Activated CD4-positive, alpha-beta T cell treated with anti-CD3 and anti-CD28 coated beads for 36 hours (primary cell): ENCODE measurements at regions of chr11 and their contacts with region 1.

Region 1: GRCh38 chr11:126268708-126269579 is at the starts of genes FOXRED1 and SRPRA:
- DNase-seq: peak; percentile 100
- ATAC-seq: peak; percentile 100
- H3K4me3 Mint-ChIP-seq: peak within 1 kb of the TSS; percentile 86
- H3K27ac Mint-ChIP-seq: peak within 1 kb of the TSS; percentile 95
- H3K4me1 Mint-ChIP-seq: peaks cover 38% of the 10 kb centered on the region
- H3K27me3 Mint-ChIP-seq: no peaks in the 10 kb centered on the region
- total RNA-seq, gene FOXRED1: 39.0 to 43.7 TPM
- total RNA-seq, gene SRPRA: 131 to 139 TPM

Region 2: DNA sequence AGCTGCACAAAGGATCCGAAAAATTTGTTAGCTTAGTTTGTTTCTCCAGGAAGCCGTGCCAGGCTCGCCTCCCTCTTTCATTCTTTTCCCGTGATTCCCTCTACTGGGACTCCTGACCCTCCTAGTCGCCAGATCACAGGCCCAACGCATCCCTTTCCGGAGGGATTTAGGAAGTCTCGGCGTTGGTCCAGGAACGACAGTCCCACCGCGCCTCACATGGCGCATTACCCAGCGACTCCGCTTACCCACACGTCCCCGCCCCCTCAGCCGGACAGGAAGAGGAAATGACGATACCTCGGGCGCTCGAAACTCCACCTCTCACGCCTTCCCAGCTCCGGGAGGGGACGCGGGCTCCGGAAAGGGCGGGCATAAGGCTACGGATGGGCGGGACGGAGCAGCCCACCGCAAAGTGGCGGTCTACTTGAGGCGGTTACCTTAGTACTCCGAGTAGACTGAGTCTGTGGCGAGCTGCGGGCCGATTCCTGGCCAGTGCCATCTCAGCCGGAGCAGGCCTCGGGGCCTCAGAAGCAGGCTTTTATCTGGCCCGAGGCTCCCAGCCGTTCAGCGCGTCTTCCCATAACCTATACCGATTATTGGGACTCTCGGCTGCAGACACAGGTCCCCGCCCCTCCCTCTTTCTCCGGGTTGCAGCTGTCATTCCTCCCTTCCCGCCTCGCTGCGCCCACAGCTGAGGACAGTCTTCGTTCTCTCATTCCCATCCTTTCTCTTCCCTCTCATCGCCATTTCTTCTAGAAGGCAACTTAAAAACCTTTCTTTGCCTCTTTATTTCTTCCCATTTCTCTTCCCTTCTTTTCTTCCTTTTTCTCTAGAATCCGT is 1315.0 kb before region 1 on chr11 and contains the start of gene CCDC15:
- CTCF ChIA-PET with region 1: no interaction called
- POLR2A ChIA-PET with region 1: no interaction called
- intact Hi-C with region 1: loop called in 1 of 2 experiments (anchors 2 kb)
- DNase-seq: peak; percentile 97
- ATAC-seq: peak; percentile 98
- H3K4me3 Mint-ChIP-seq: no peak within 1 kb of the TSS
- H3K27ac Mint-ChIP-seq: no peak within 1 kb of the TSS
- H3K4me1 Mint-ChIP-seq: peaks cover 4% of the 10 kb centered on the region
- H3K27me3 Mint-ChIP-seq: no peaks in the 10 kb centered on the region
- total RNA-seq, gene CCDC15: 5.6 to 6.7 TPM

Region 3: GRCh38 chr11:125592305-125593112 is 676.4 kb before region 1 on chr11 and contains the start of gene STT3A:
- CTCF ChIA-PET with region 1: no interaction called
- POLR2A ChIA-PET with region 1: no interaction called
- intact Hi-C with region 1: loop called in 1 of 2 experiments (anchors 2 kb)
- DNase-seq: peak; percentile 99
- ATAC-seq: peak; percentile 93
- H3K4me3 Mint-ChIP-seq: peak within 1 kb of the TSS; percentile 97
- H3K27ac Mint-ChIP-seq: peak within 1 kb of the TSS; percentile 95
- H3K4me1 Mint-ChIP-seq: peaks cover 48% of the 10 kb centered on the region
- H3K27me3 Mint-ChIP-seq: no peaks in the 10 kb centered on the region
- total RNA-seq, gene STT3A: 127 to 128 TPM

Region 4: DNA sequence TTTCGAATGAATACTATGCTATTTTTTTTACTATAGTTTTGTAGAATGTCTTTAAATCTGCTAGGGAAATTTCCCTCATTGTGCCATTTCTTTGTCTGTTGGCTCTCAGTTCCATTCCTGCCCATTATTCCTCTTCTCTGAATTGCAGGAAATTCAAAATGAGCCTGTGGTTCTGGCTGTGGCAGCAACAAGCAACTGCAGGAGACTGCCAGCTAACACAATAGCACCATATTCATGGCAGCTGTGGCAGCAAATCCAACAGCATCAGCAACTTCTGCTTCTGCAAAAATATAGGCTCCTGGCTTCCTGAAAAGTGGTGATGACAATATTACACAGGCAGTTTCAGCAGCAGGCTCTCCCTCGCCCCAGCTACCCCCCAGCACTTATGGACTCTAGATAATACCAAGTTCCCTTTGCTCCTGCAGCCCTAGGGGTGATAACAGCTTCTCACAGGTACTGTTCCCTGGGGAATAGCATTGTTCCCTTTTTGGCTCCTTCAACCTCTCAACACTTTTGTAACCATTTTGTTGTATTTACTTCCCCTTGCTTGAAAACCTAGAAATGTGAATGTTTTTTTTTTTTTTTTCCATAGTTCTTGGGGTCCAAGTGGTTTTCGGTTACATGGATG is 426.5 kb before region 1 on chr11:
- CTCF ChIA-PET with region 1: no interaction called
- POLR2A ChIA-PET with region 1: no interaction called
- intact Hi-C with region 1: no loop called
- DNase-seq: no peak
- ATAC-seq: no peak
- H3K4me3 Mint-ChIP-seq: no peak overlapping the region
- H3K27ac Mint-ChIP-seq: no peak overlapping the region
- H3K4me1 Mint-ChIP-seq: no peaks in the 10 kb centered on the region
- H3K27me3 Mint-ChIP-seq: peaks cover 2% of the 10 kb centered on the region

Region 5: DNA sequence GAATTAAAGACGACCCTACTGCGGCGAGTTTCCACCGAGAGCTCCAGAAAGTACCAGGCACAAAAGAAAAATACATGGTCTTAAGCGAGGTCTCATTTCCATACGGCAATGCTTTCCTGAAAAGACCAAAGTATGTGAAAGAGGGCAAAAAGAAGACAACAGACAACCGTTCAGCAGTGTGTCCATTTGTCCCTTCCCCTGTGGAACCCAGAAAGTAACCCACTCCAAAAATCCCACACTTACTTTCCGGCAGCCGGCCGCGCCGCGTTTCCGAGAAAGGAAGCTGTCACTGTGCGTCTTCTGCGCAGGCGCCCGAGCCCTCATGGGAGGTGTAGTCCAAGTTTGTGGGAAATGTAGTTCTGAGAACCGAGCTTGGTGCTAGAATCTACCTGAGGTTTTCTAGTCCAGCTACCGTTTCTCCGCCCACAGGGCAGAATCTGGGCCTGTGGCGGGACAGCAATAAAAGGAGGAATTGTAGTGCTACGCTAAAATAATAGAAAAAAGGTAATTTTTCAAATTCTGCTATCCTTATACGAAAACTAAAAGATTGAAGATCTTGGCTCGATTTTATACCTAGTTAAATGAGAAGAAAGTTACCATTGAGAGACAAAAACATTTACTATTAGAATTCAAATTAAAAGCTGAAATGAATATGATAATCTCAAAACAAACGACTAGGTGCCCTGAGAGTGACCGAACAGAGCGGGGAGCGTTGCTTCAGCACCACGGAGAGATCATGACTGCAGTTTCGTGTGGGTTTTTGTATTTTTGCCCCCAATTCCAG is 365.8 kb before region 1 on chr11 and contains the start of gene PUS3:
- CTCF ChIA-PET with region 1: no interaction called
- POLR2A ChIA-PET with region 1: interaction called, 4 read pairs
- intact Hi-C with region 1: loop called (anchors 2 kb)
- DNase-seq: peak; percentile 94
- ATAC-seq: peak; percentile 97
- H3K4me3 Mint-ChIP-seq: peak within 1 kb of the TSS; percentile 95
- H3K27ac Mint-ChIP-seq: peak within 1 kb of the TSS; percentile 97
- H3K4me1 Mint-ChIP-seq: peaks cover 35% of the 10 kb centered on the region
- H3K27me3 Mint-ChIP-seq: peaks cover 17% of the 10 kb centered on the region
- total RNA-seq, gene PUS3: 14.3 to 19.9 TPM

Region 6: DNA sequence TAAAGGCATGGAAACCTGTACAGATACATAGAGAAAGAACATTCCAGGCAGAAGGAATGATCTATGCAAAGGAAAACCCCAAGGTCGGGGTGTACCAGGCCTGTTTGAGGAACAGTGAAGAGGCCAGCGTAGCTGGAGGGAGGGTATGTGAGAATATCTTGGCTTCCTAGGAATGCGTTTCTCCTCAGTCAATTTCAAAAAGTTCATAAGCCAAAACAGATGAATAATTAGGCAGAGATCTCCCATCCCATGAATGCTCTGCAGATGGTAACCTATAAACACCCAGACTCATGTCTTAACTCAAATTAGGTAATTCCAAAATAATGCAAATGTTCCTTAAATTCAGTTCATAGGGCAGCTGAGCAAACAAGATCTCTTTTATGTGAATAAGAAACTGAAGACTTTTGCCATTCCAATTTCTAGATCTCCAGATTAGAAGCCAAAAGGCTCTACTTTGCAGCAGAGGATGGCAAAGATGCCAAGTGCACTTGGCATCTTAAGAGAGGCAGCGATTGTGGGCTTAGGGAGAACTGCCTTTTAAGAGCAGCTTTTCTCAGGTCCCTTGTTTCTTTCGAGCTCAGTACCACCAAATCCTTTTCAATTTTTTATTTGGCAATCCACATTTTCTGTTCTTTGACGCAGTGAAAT is 44.2 kb before region 1 on chr11:
- CTCF ChIA-PET with region 1: no interaction called
- POLR2A ChIA-PET with region 1: no interaction called
- intact Hi-C with region 1: no loop called
- DNase-seq: no peak
- ATAC-seq: no peak
- H3K4me3 Mint-ChIP-seq: no peak overlapping the region
- H3K27ac Mint-ChIP-seq: no peak overlapping the region
- H3K4me1 Mint-ChIP-seq: peaks cover 2% of the 10 kb centered on the region
- H3K27me3 Mint-ChIP-seq: no peaks in the 10 kb centered on the region

Region 7: DNA sequence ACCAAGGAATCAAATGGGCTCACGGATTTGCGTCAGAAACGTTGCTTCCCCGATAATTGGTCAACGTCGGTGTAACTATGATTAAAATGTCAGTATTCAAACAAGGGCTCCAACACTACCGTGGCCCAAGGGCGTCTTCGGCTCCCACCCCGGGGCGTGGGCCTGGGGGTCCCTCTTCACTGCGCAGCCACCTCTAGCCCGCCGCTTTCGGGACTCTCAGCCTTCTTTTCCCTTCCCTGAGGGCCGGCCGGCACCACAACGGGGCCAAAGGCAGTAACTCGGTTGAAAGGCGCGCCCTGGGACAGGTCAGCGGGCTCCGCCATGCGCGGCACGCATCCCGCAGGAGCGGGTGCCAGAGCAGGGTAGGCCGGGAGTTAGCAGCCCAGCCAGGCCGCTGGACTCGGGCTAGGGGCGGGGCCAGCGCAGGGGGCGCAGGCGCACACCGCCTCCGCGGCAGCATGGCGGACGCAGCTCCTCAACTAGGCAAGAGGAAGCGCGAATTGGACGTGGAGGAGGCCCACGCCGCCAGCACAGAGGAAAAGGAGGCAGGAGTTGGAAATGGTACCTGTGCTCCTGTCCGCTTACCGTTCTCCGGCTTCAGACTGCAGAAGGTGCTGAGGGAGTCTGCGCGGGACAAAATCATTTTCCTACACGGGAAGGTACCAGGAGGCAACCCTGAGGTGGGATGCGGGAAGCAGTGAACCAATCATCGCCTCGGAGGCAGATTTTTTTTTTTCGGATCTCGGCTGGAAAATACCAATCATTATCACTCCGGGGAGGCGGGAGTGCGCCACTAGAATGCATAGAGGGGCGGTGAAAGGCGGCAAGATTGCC is 34.9 kb after region 1 on chr11 and contains the start of gene DCPS:
- CTCF ChIA-PET with region 1: interaction called, 6 read pairs
- POLR2A ChIA-PET with region 1: interaction called, 4 read pairs
- intact Hi-C with region 1: loop called (anchors 1 kb)
- DNase-seq: peak; percentile 92
- ATAC-seq: peak; percentile 93
- H3K4me3 Mint-ChIP-seq: peak within 1 kb of the TSS; percentile 85
- H3K27ac Mint-ChIP-seq: peak within 1 kb of the TSS; percentile 98
- H3K4me1 Mint-ChIP-seq: peaks cover 32% of the 10 kb centered on the region
- H3K27me3 Mint-ChIP-seq: no peaks in the 10 kb centered on the region
- total RNA-seq, gene DCPS: 29.7 to 39.3 TPM